ENCODE measurements at regions of chr11 and their contacts with region 1.

Region 1: DNA sequence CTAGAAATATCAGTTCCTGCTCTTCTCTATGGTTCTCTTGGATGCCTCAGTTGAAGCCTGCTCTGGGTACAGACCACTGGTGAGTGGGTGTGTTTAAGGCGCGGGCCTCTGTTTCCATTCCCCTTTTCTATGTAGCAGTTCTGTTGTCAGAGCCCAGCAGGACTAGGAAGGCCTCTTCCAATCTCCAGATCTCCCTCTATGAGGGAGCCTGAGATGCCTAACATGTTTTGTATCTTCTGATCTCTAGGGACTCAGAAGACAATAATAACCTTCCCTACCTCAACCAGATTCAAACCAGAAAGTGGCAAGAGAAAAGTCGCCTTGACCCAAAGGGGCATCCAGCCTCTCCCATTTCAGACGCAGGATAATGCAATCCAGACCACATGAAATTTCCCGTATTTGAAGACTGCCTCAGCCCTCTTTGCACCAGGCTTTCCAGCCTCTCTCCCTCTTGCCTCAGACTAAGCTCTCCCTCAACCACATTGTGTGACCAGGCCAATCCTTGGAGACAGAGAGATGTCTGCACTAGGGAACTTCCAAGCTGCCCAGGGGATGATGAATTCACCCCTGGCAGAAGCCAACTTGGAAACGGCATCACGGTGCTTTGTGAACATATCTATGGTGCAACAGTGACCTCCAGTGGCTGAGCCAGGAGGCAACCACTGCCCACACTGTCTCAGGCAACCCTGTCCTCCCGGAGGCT is 150.1 kb upstream of the UBASH3B start:
- DNase-seq: peak in 3 of 4 donors; percentile 74 to 88 (median 80)
- ATAC-seq: peak; percentile 100
- H3K4me3 ChIP-seq: no peak overlapping the region
- H3K27ac ChIP-seq: no peak overlapping the region
- H3K4me1 ChIP-seq: no peaks in the 10 kb centered on the region
- H3K27me3 ChIP-seq: no peaks in the 10 kb centered on the region
- CTCF ChIP-seq: peak; percentile 73 to 83

Region 2: GRCh38 chr11:121661880-121662486 is 843.5 kb before region 1 on chr11:
- intact Hi-C with region 1: loop called in 1 of 2 experiments (anchors 10 kb)
- DNase-seq: no peak
- ATAC-seq: peak; percentile 39
- H3K4me3 ChIP-seq: no peak overlapping the region
- H3K27ac ChIP-seq: no peak overlapping the region
- H3K4me1 ChIP-seq: no peaks in the 10 kb centered on the region
- H3K27me3 ChIP-seq: no peaks in the 10 kb centered on the region
- CTCF ChIP-seq: no peak

Region 3: DNA sequence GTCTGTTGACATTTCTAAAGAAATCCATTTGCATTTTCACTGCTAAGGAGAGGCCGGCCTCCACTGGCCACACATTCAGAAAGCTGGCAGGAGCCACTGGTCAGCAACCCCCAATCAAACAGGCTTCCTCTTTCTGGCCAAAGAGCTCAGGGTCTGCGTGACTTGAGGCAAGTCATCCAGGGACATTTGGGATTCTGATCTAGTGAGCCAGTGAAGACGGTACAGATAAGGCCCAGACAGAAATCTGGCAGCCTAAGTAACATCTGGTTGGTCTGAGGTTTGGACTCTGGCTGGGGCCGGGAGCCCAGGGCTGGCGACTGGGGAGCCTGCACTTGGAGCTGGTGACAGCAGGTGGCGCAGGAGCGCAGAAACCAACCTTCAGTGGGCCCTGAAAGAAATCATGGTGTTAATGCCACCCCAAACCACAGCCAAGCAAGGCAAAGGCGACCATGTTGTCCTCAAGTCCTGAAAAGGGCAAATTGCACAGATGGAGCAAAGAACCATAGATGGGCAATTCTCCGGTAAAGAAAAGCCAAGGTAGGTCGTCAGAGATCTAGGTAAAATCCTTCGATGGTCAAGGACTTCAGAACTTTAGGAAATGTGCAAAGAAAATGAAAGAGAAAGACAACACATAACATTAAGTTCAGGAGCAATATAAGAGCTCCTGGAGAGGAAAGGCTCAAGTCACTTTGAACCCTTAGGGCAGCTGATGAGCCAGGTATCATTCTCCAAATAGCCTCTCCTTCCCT is 290.0 kb before region 1 on chr11:
- intact Hi-C with region 1: loop called in 1 of 2 experiments (anchors 5 kb)
- DNase-seq: peak; percentile 70 to 88 (median 77)
- ATAC-seq: peak; percentile 98
- H3K4me3 ChIP-seq: no peak overlapping the region
- H3K27ac ChIP-seq: no peak overlapping the region
- H3K4me1 ChIP-seq: peaks cover 6 to 8% of the 10 kb centered on the region in 2 donors
- H3K27me3 ChIP-seq: no peaks in the 10 kb centered on the region
- CTCF ChIP-seq: peak; percentile 94 to 95

Region 4: GRCh38 chr11:122293296-122294023 is 212.0 kb before region 1 on chr11:
- intact Hi-C with region 1: loop called in 1 of 2 experiments (anchors 10 kb)
- DNase-seq: no peak
- ATAC-seq: no peak
- H3K4me3 ChIP-seq: no peak overlapping the region
- H3K27ac ChIP-seq: no peak overlapping the region
- H3K4me1 ChIP-seq: no peaks in the 10 kb centered on the region
- H3K27me3 ChIP-seq: no peaks in the 10 kb centered on the region
- CTCF ChIP-seq: no peak

Region 5: DNA sequence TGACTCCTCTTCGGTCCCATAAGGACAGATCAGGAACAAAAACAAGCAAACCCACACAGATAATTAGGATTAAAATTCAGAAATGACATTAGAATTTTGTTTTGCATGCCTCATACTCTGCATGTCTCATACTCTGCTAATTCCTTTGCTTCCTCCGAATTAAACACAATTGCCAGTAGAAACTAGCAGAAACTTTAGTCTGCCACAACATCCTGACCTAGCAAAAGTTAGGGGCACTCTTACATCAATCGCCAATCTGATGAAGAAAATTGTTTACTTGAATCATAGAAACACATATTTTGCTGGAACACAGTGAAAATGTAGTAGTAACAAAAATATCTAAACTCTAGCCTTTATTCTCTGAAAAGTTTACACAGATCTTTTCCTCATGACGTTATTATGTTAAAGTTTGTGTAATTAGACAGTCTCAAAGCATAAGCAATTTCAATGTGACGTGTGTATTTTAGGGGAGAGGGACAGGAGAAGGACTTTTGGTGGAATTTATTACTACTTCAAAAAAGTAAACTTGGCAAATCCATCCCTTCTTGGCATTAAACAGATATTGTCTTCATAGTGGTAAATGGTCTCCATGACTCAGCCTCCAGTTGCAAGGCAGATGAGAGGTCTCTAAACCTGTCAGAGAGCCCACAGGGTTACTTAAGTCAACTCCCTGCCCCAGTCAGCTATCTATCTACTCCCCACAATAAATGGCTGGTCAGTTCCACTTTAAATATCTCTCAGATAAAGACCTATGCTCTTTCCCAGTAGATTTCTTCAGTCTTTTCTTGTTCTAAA is 99.7 kb before region 1 on chr11:
- intact Hi-C with region 1: no loop called
- DNase-seq: peak in 2 of 4 donors; percentile 16 to 33
- ATAC-seq: peak; percentile 55
- H3K4me3 ChIP-seq: no peak overlapping the region
- H3K27ac ChIP-seq: no peak overlapping the region
- H3K4me1 ChIP-seq: no peaks in the 10 kb centered on the region
- H3K27me3 ChIP-seq: no peaks in the 10 kb centered on the region
- CTCF ChIP-seq: no peak

Measured in left lung (tissue), 14 donors.